ENCODE measurements at regions of chr19 and their contacts with region 1.

Region 1: DNA sequence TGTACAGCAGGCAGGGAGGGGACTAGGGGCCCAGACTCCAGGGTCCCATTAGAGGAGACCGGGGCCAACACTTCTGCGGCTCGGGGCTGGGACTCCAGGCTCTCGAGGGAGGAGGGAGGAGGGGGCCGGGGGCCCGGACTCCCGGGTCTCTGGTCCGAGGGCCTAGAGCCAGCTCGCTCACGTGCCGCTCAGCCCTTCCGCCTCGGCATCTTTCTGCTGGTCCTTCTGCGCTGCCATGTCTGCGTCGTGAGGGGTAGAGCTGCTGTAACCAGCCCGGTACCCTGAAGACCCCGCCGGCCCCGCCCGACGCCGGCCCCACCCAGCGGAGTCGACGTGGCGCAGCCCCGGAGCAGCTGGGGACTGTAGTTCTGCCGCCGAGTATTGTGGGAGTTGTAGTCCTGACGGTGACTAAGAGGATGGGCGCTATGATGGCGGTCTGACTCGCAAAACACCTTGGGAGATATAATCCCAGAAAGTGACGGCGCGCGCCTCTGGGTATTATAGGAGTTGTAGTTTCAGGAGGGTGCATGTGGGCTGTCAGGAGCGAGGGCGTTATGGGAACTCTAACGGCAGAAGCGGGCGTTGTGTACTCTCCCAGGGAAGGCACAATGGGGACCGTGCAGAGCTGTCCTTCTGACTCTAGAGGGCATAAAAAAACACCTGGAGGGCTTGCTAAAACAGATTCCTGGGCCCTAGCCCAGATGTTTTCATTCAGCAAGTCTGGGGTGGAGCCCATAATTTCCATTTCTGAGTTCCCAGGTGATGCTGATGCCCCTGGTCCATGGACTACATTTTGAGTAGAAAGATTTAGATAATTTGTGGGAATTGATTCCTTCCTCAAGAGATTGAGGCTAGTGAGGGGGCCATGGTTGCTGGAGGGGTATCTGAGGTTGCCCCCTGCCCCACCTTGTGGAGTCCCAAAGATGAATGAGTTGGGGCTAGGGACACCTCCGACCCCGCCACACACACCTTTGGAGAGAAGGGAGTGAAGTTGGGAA is at the start of gene RABAC1:
- DNase-seq: peak; percentile 94
- H3K4me3 ChIP-seq: peak within 1 kb of the TSS; percentile 62 to 93 (median 92)
- H3K27ac ChIP-seq: peak within 1 kb of the TSS; percentile 86 to 91 (median 88)
- H3K4me1 ChIP-seq: peaks cover 0 to 19% (median 14%) of the 10 kb centered on the region in 4 donors
- H3K27me3 ChIP-seq: no peaks in the 10 kb centered on the region
- CTCF ChIP-seq: no peak
- EP300 ChIP-seq: no peak
- POLR2A ChIP-seq: peak; percentile 27 to 42
- total RNA-seq, gene RABAC1: 128 to 255 (median 180) TPM

Region 2: GRCh38 chr19:41859618-41860418 is 99.5 kb before region 1 on chr19 and contains the start of gene RPS19:
- intact Hi-C with region 1: loop called (anchors 2 kb)
- DNase-seq: peak; percentile 99
- H3K4me3 ChIP-seq: peak within 1 kb of the TSS; percentile 84 to 98 (median 89)
- H3K27ac ChIP-seq: peak within 1 kb of the TSS; percentile 88 to 97 (median 94)
- H3K4me1 ChIP-seq: peaks cover 0 to 39% (median 31%) of the 10 kb centered on the region in 4 donors
- H3K27me3 ChIP-seq: no peaks in the 10 kb centered on the region
- CTCF ChIP-seq: peak; percentile 60 to 92 (median 78)
- EP300 ChIP-seq: no peak
- POLR2A ChIP-seq: peak; percentile 47 to 61
- total RNA-seq, gene RPS19: 738 to 1,695 (median 1,093) TPM

Region 3: DNA sequence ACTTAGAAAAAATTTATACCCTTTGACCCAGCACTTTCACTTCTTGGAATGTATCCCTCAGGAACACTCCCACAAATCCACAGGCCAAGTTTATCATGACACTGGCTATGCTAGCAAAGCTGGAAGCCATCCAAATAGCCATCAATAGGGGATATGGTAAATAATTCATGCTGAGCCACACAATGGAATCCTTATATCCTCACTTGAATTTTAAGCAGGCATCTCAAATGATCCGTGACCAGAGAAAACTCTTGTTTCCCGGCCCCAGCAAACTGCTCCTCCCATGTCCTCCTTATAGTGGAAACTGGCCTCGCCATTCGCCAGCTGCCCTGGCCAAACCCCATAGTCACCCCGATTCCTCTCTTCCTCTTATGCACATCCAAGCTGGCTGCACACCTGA is 73.1 kb after region 1 on chr19:
- intact Hi-C with region 1: loop called (anchors 10 kb)
- DNase-seq: no peak
- H3K4me3 ChIP-seq: no peak overlapping the region
- H3K27ac ChIP-seq: peak overlapping the region in 2 of 4 donors; percentile 8 to 43
- H3K4me1 ChIP-seq: peaks cover 0 to 20% (median 15%) of the 10 kb centered on the region in 4 donors
- H3K27me3 ChIP-seq: no peaks in the 10 kb centered on the region
- CTCF ChIP-seq: no peak
- EP300 ChIP-seq: no peak
- POLR2A ChIP-seq: no peak

Measured in sigmoid colon (tissue), 7 donors.